Ovary (tissue), 10 donors: ENCODE measurements at regions of chrX and their contacts with region 1.

Region 1: GRCh38 chrX:110375320-110375719 is 16.7 kb downstream of the RTL9 start:
- DNase-seq: no peak
- H3K4me3 ChIP-seq: no peak overlapping the region
- H3K27ac ChIP-seq: no peak overlapping the region
- H3K4me1 ChIP-seq: peaks cover 2% of the 10 kb centered on the region
- H3K27me3 ChIP-seq: no peaks in the 10 kb centered on the region
- CTCF ChIP-seq: no peak
- EP300 ChIP-seq: no peak
- POLR2A ChIP-seq: no peak

Region 2: GRCh38 chrX:110588164-110588563 is 212.8 kb after region 1 on chrX:
- intact Hi-C with region 1: loop called in 1 of 4 experiments (anchors 5 kb)
- DNase-seq: no peak
- H3K4me3 ChIP-seq: no peak overlapping the region
- H3K27ac ChIP-seq: no peak overlapping the region
- H3K4me1 ChIP-seq: no peaks in the 10 kb centered on the region
- H3K27me3 ChIP-seq: no peaks in the 10 kb centered on the region
- CTCF ChIP-seq: no peak
- EP300 ChIP-seq: no peak
- POLR2A ChIP-seq: no peak

Region 3: DNA sequence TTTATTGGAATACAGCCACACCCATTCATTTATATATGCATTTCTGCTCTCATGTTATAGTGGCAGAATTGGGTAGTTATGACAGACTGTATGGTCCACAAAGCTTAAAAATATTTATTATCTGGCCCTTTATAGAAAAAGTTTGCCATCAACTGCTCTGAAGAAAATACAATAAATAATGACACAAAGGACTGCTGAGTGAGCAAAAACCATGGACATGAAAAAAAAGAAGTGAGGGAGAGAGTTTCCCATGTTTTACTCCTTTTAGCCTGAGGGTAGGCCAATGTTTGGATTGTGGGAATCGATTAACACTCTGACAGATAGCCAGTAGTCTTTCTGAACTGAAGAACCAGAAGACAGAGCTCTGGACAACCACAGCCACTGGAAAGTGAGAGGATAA is 271.1 kb after region 1 on chrX:
- intact Hi-C with region 1: no loop called
- DNase-seq: no peak
- H3K4me3 ChIP-seq: no peak overlapping the region
- H3K27ac ChIP-seq: no peak overlapping the region
- H3K4me1 ChIP-seq: no peaks in the 10 kb centered on the region
- H3K27me3 ChIP-seq: no peaks in the 10 kb centered on the region
- CTCF ChIP-seq: no peak
- EP300 ChIP-seq: no peak
- POLR2A ChIP-seq: no peak